Activated T-helper 1 cell treated with anti-CD3 and anti-CD28 coated beads, Interleukin-12 subunit alpha, Interleukin-12 subunit beta, Interleukin-2, Interleukin-4 antibody, amounts not matched to agents 30 ng/mL and 10 ng/mL and 1 ng/mL, durations not matched to agents 14 hours and 24 hours and 36 hours (primary cell): ENCODE measurements at regions of chr4 and their contacts with region 1.

Region 1: GRCh38 chr4:25159884-25160713 is at the start of gene SEPSECS:
- DNase-seq: peak; percentile 93
- H3K4me3 Mint-ChIP-seq: peak within 1 kb of the TSS; percentile 91
- H3K27ac Mint-ChIP-seq: peak within 1 kb of the TSS; percentile 90
- H3K4me1 Mint-ChIP-seq: peaks cover 36% of the 10 kb centered on the region
- H3K27me3 Mint-ChIP-seq: peaks cover 3% of the 10 kb centered on the region
- total RNA-seq, gene SEPSECS: 13.4 and 15.3 TPM in 2 replicates

Region 2: GRCh38 chr4:24472514-24473308 is 687.4 kb before region 1 on chr4:
- intact Hi-C with region 1: loop called (anchors 10 kb)
- DNase-seq: peak; percentile 43
- H3K4me3 Mint-ChIP-seq: peak overlapping the region; percentile 92
- H3K27ac Mint-ChIP-seq: peak overlapping the region; percentile 92
- H3K4me1 Mint-ChIP-seq: peaks cover 47% of the 10 kb centered on the region
- H3K27me3 Mint-ChIP-seq: peaks cover 62% of the 10 kb centered on the region

Region 3: GRCh38 chr4:24973733-24974601 is 186.1 kb before region 1 on chr4:
- intact Hi-C with region 1: no loop called
- DNase-seq: no peak
- H3K4me3 Mint-ChIP-seq: no peak overlapping the region
- H3K27ac Mint-ChIP-seq: no peak overlapping the region
- H3K4me1 Mint-ChIP-seq: no peaks in the 10 kb centered on the region
- H3K27me3 Mint-ChIP-seq: peaks cover 10% of the 10 kb centered on the region

Region 4: GRCh38 chr4:25123236-25123635 is 36.9 kb before region 1 on chr4:
- intact Hi-C with region 1: loop called (anchors 1 kb)
- DNase-seq: peak; percentile 26
- H3K4me3 Mint-ChIP-seq: no peak overlapping the region
- H3K27ac Mint-ChIP-seq: peak overlapping the region; percentile 64
- H3K4me1 Mint-ChIP-seq: peaks cover 22% of the 10 kb centered on the region
- H3K27me3 Mint-ChIP-seq: no peaks in the 10 kb centered on the region

Region 5: GRCh38 chr4:25190407-25190806 is 30.3 kb after region 1 on chr4:
- intact Hi-C with region 1: no loop called
- DNase-seq: no peak
- H3K4me3 Mint-ChIP-seq: no peak overlapping the region
- H3K27ac Mint-ChIP-seq: no peak overlapping the region
- H3K4me1 Mint-ChIP-seq: peaks cover 6% of the 10 kb centered on the region
- H3K27me3 Mint-ChIP-seq: no peaks in the 10 kb centered on the region

Region 6: DNA sequence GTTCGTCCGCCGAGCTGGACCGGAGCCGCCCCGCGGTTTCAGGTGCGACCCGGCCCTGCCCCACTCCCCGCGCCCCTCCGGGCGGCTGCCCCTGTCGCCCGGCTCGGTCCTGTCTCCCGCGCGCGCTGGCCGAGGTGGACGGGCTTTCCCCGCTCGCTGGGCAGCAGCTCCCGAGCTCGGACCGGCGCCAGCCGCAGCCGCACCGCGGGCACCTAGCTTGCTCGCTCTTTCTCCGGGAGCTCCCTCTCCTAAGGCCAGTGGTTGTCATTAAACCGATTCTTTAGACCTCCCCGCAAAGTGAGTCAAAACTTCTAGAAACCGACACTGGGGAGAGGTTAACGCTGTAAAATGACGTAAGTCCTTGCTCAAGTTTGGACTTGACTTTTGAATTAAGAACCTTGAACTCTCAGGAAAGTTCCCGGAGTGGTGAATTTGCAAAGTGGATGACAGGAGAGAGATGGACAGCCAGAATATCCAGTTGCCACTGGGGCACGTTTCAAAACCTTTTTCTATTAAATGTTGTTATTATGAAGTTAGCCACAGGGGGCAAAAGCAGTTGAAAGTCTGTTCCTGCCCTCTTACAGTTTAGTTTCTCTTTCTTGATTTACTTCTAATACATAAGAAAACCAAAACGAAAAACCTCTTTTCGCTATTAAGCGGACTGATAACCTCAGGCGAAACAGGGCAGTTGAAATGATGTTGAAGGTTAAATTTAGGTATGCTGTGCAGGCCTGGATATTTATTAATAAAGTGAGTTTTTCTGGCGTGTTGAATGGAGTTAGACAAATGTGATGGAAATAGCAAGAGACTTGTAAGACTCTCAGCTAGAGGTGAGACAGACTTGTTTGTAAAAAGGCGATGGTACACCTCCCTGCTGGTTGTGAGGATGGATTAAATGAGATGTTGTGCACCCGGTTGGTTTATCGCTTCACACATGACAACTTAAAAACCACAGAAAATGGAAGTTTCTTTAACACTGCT is 74.6 kb after region 1 on chr4:
- intact Hi-C with region 1: loop called (anchors 1 kb)
- DNase-seq: peak; percentile 38
- H3K4me3 Mint-ChIP-seq: peak overlapping the region; percentile 92
- H3K27ac Mint-ChIP-seq: peak overlapping the region; percentile 98
- H3K4me1 Mint-ChIP-seq: peaks cover 37% of the 10 kb centered on the region
- H3K27me3 Mint-ChIP-seq: no peaks in the 10 kb centered on the region

Region 7: GRCh38 chr4:25367004-25367621 is 207.0 kb after region 1 on chr4:
- intact Hi-C with region 1: loop called (anchors 1 kb)
- DNase-seq: no peak
- H3K4me3 Mint-ChIP-seq: no peak overlapping the region
- H3K27ac Mint-ChIP-seq: no peak overlapping the region
- H3K4me1 Mint-ChIP-seq: no peaks in the 10 kb centered on the region
- H3K27me3 Mint-ChIP-seq: no peaks in the 10 kb centered on the region

Region 8: GRCh38 chr4:25913851-25914669 is 754.0 kb after region 1 on chr4 and contains the start of gene SMIM20:
- intact Hi-C with region 1: loop called (anchors 2 kb)
- DNase-seq: peak; percentile 88
- H3K4me3 Mint-ChIP-seq: peak within 1 kb of the TSS; percentile 94
- H3K27ac Mint-ChIP-seq: peak within 1 kb of the TSS; percentile 99
- H3K4me1 Mint-ChIP-seq: peaks cover 24% of the 10 kb centered on the region
- H3K27me3 Mint-ChIP-seq: peaks cover 5% of the 10 kb centered on the region
- total RNA-seq, gene SMIM20: 19.2 and 21.5 TPM in 2 replicates

Region 9: GRCh38 chr4:26088433-26088928 is 928.4 kb after region 1 on chr4:
- intact Hi-C with region 1: no loop called
- DNase-seq: peak; percentile 34
- H3K4me3 Mint-ChIP-seq: peak overlapping the region; percentile 71
- H3K27ac Mint-ChIP-seq: peak overlapping the region; percentile 94
- H3K4me1 Mint-ChIP-seq: peaks cover 68% of the 10 kb centered on the region
- H3K27me3 Mint-ChIP-seq: no peaks in the 10 kb centered on the region